ENCODE measurements at regions of chr20 and their contacts with region 1.

Region 1: DNA sequence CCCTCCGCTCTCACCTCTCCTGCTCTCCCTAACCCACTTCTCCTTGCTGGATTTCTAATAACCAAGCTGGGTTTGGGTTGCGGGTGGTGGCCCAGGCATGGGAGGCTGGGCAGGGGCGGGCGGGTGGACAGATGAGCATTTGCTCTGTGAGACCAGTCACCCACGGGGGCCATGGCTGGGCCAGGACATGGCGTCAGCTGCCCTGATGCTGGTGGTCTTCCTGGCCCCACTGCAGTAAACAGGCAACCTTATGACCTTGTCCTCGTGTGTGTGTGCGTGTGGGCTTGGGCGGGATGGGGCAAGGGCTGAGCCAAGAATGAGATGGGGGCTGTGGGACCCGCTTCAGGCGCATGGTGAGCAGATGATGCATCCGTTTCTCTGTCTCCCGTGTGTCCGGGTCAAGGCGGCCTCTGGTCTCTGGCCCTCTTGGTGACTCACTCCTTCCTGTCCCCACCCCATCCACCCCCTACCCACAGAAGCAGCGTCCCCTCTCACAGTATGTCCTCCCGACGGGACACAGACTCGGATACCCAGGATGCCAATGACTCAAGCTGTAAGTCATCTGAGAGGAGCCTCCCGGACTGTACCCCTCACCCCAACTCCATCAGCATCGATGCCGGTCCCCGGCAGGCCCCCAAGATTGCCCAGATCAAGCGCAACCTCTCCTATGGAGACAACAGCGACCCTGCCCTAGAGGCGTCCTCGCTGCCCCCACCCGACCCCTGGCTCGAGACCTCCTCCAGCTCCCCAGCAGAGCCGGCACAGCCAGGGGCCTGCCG is 41.4 kb upstream of the MYL9 start:
- DNase-seq: no peak
- H3K4me3 ChIP-seq: no peak overlapping the region
- H3K27ac ChIP-seq: peak overlapping the region; percentile 4 to 34
- H3K4me1 ChIP-seq: peaks cover 0 to 52% (median 10%) of the 10 kb centered on the region in 4 donors
- H3K27me3 ChIP-seq: no peaks in the 10 kb centered on the region
- CTCF ChIP-seq: no peak

Region 2: GRCh38 chr20:36384022-36384619 is 115.8 kb before region 1 on chr20:
- intact Hi-C with region 1: no loop called
- DNase-seq: no peak
- H3K4me3 ChIP-seq: no peak overlapping the region
- H3K27ac ChIP-seq: no peak overlapping the region
- H3K4me1 ChIP-seq: no peaks in the 10 kb centered on the region
- H3K27me3 ChIP-seq: peaks cover 0 to 35% of the 10 kb centered on the region in 2 donors
- CTCF ChIP-seq: no peak

Region 3: GRCh38 chr20:36481381-36482043 is 18.4 kb before region 1 on chr20:
- intact Hi-C with region 1: loop called (anchors 2 kb)
- DNase-seq: no peak
- H3K4me3 ChIP-seq: no peak overlapping the region
- H3K27ac ChIP-seq: peak overlapping the region; percentile 64 to 77
- H3K4me1 ChIP-seq: peaks cover 0 to 97% (median 88%) of the 10 kb centered on the region in 4 donors
- H3K27me3 ChIP-seq: no peaks in the 10 kb centered on the region
- CTCF ChIP-seq: no peak